A673 (cell line): ENCODE measurements at regions of chr5 and their contacts with region 1.

Region 1: DNA sequence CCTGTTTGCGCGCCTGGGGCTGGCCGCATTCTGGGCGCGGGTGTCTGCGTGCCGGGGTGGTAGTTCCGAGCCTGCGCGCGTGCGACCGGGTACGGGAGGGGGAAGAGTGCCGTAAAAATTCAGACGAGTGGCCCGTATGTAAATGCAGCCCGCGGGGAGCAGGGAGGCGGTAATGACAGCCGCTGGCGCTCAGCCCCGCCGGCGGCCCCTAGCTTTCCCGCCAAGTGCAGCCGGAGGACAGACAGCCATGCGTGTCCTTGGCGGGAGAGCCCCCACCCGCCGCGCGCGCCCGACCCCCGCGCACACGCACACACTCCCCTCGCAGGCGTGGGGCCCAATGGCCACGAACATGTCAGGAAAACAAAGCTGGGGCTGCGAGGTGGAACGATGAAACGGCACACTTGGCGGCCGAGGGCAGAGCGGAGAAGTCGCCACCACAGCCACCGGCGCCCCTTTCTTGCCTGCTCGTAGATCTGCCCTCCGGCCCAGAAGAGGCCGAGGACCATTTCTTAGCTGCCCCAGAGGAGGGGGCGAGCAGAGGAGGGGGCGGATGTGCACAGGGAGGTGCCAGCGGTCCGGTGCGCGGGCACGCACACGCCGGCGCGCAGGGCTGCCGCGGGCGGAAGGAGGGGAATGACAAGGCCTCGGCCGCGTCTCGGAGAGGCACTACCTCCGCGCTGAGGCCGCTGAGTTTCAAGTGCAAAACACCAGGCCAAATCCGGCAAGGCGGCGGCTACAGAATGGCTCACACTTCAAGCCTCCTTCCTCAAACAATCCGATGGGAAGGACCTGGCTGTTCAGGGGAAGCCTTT is 208.4 kb downstream of the MEF2C start:
- DNase-seq: peak; percentile 93
- H3K4me3 ChIP-seq: peak overlapping the region; percentile 64
- H3K27ac ChIP-seq: peak overlapping the region; percentile 94
- H3K4me1 ChIP-seq: peaks cover 43% of the 10 kb centered on the region
- H3K27me3 ChIP-seq: no peaks in the 10 kb centered on the region
- CTCF ChIP-seq: no peak

Region 2: GRCh38 chr5:88268385-88269184 is 406.0 kb before region 1 on chr5 and contains the start of gene TMEM161B:
- CTCF ChIA-PET with region 1: no interaction called
- POLR2A ChIA-PET with region 1: no interaction called
- intact Hi-C with region 1: loop called (anchors 5 kb)
- DNase-seq: peak; percentile 96
- H3K4me3 ChIP-seq: peak within 1 kb of the TSS; percentile 71
- H3K27ac ChIP-seq: peak within 1 kb of the TSS; percentile 61
- H3K4me1 ChIP-seq: peaks cover 16% of the 10 kb centered on the region
- H3K27me3 ChIP-seq: no peaks in the 10 kb centered on the region
- CTCF ChIP-seq: no peak
- total RNA-seq, gene TMEM161B: 19.7 and 20.7 TPM in 2 replicates

Region 3: DNA sequence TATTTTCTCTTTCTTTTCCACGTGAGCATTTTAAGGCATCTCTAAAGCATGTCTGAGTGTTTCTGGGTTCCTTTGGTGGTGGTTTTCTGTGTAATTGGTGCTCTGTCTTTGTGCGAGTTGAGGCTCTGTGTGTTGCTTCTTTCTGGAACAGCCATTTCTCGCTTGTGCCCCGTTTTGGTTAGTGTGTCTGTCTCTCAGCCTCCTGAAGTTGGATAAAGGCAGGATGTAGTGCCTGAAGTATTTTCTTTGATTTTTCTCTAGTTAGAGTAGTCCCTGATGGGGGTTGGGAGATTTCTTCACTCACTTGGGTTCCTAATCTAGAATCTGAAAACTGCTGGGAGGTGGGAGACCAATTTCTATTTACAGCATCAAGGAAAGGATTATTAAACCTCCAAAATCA is 276.2 kb before region 1 on chr5:
- CTCF ChIA-PET with region 1: no interaction called
- POLR2A ChIA-PET with region 1: interaction called, 3 read pairs
- intact Hi-C with region 1: loop called (anchors 5 kb)
- DNase-seq: no peak
- H3K4me3 ChIP-seq: no peak overlapping the region
- H3K27ac ChIP-seq: peak overlapping the region; percentile 27
- H3K4me1 ChIP-seq: no peaks in the 10 kb centered on the region
- H3K27me3 ChIP-seq: no peaks in the 10 kb centered on the region
- CTCF ChIP-seq: no peak